ENCODE measurements at regions of chr2 and their contacts with region 1.

Region 1: DNA sequence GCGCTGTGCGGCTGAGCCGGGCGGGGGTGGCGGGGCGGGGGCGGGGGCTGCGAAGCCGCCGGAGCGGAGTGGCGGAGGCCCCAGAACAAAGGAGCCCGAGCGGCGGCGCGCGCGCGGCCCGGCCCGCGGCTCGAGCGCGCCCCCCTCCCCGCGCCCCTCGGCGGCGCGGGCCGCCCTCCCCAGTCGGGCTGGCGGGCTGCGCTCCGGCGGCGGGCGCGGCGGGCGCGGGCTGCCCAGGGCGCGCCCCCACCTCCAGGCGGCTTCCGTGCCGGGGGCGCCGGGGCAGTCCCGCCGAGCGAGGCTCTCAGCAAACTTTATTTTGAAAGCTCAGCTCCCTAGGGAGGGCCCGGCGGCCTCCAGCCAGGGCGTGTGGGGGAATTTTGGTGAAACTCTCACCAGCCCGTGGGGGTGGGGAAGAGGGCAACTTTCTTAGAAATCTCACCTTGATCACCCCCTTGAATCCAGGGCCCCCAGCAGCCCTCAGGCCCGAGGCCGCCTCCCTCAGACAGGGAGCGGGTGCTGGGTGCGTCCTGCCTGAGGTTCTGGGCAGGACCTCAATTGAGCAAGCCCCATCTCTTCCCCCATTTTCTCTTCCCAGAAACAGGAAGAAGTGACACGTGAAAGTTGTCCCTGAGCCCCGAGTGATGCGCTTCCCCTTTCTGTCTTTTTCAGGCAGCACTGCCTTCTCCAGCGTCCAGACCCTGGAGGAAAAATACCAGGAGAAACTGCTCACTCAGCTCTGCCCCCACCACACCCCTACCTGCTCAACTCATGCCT is 786 bp downstream of the TET3 start:
- DNase-seq: peak; percentile 55 to 89 (median 81)
- ATAC-seq: no peak
- H3K4me3 ChIP-seq: peak overlapping the region; percentile 51
- H3K27ac ChIP-seq: peak overlapping the region; percentile 83
- H3K4me1 ChIP-seq: peaks cover 63% of the 10 kb centered on the region in 2 experiments
- H3K27me3 ChIP-seq: no peaks in the 10 kb centered on the region
- CTCF ChIP-seq: no peak
- EP300 ChIP-seq: 0 out of 2 replicates have a peak, but pooled peaks have one; percentile 3
- POLR2A ChIP-seq: no peak
- RAD21 ChIP-seq: no peak

Region 2: DNA sequence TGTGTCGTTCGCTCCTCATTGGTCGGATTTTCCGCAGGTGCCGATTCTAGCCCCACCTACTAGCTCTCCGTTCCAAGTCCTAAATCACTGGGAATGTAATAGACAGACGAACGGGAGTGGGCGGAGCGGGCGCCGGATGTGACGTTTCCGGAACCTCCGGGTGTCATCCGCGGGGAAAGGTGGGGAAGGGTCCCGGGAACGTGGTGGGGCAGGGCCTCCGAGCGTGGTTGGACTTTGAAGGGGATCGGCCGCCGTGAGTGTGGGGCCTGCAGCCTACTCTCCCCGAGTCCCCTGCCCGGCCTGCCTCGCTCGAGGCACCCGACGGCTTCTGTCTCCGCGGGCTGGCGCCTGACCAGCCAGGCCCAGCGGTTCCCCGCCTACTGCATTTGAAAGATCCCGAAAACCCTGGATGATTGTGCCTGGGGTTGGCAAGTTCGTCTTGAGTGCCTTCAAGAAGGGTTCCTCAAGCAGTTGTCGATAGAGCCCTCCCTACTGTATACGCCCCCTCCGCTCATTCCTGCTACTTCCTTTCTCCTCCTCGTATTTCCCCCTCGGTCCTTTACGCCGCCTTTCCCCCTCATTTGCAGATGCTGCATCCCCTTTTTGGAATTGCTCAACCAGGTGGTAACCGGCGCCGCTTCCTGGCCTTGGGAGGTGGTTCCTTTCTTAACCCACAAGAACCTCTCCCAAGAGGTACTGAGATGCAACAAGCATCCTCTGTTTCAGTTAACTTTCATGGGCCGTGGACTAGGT is 156.5 kb before region 1 on chr2 and contains the start of gene STAMBP:
- CTCF ChIA-PET with region 1: interaction called, 4 read pairs
- POLR2A ChIA-PET with region 1: no interaction called
- in situ Hi-C with region 1: no loop called
- intact Hi-C with region 1: loop called (anchors 10 kb)
- DNase-seq: peak; percentile 95 to 98 (median 96)
- ATAC-seq: peak; percentile 95
- H3K4me3 ChIP-seq: peak within 1 kb of the TSS; percentile 62
- H3K27ac ChIP-seq: peak within 1 kb of the TSS; percentile 89
- H3K4me1 ChIP-seq: peaks cover 7 to 13% of the 10 kb centered on the region in 2 experiments; a peak in 4 of 5 replicates
- H3K27me3 ChIP-seq: no peaks in the 10 kb centered on the region
- CTCF ChIP-seq: no peak
- EP300 ChIP-seq: no peak
- POLR2A ChIP-seq: peak; percentile 89
- RAD21 ChIP-seq: no peak
- polyA plus RNA-seq, gene STAMBP: 50.1 to 75.2 TPM

Region 3: DNA sequence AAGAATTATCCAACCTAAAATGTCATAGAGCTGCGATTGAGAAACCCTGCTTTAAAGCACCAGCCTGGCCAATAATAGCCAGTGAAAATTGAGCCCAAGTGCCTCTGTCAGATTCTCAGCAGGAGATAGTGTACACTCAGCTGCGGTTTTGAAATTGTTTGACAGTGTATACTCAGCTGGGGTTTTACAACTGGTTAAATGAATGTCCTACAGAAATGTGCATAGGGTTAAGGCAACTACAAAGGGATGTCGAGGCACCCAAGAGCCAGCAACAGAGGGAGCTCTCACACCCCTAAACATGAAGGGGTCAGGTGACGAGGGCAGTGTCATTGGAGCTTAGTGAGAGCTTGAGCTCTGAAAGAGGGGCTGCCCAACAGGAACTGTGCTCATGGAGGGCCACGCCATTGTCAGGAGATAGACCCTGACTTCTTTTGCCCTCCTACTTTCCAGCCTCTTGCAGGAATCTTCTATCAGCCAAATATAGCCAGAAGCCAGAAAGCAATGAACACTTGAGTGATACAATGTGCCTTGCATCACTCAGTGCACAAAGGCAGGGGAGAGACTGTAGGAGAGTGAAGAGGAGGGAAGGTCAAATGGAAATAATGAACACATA is 77.5 kb before region 1 on chr2:
- CTCF ChIA-PET with region 1: interaction called, 4 read pairs
- POLR2A ChIA-PET with region 1: no interaction called
- in situ Hi-C with region 1: no loop called
- intact Hi-C with region 1: loop called (anchors 1 kb)
- DNase-seq: peak in 3 of 4 experiments; percentile 27 to 73 (median 63)
- ATAC-seq: peak; percentile 97
- H3K4me3 ChIP-seq: no peak overlapping the region
- H3K27ac ChIP-seq: no peak overlapping the region
- H3K4me1 ChIP-seq: no peaks in the 10 kb centered on the region; a peak in 1 of 5 replicates
- H3K27me3 ChIP-seq: no peaks in the 10 kb centered on the region
- CTCF ChIP-seq: peak; percentile 69 to 78 (median 73)
- EP300 ChIP-seq: no peak
- POLR2A ChIP-seq: no peak
- RAD21 ChIP-seq: peak; percentile 68 to 87

Region 4: GRCh38 chr2:73920577-73921545 is 64.6 kb before region 1 on chr2:
- CTCF ChIA-PET with region 1: no interaction called
- POLR2A ChIA-PET with region 1: interaction called, 3 read pairs
- in situ Hi-C with region 1: no loop called
- intact Hi-C with region 1: loop called (anchors 1 kb)
- DNase-seq: peak; percentile 87 to 89 (median 88)
- ATAC-seq: peak; percentile 95
- H3K4me3 ChIP-seq: no peak overlapping the region
- H3K27ac ChIP-seq: no peak overlapping the region
- H3K4me1 ChIP-seq: peaks cover 11 to 18% of the 10 kb centered on the region in 2 experiments
- H3K27me3 ChIP-seq: no peaks in the 10 kb centered on the region
- CTCF ChIP-seq: peak; percentile 71 to 76 (median 74)
- EP300 ChIP-seq: no peak
- POLR2A ChIP-seq: no peak
- RAD21 ChIP-seq: peak; percentile 41 to 61

Region 5: GRCh38 chr2:73956231-73956865 is 29.1 kb before region 1 on chr2:
- CTCF ChIA-PET with region 1: no interaction called
- POLR2A ChIA-PET with region 1: interaction called, 4 read pairs
- in situ Hi-C with region 1: no loop called
- intact Hi-C with region 1: loop called (anchors 2 kb)
- DNase-seq: no peak
- ATAC-seq: no peak
- H3K4me3 ChIP-seq: no peak overlapping the region
- H3K27ac ChIP-seq: no peak overlapping the region
- H3K4me1 ChIP-seq: no peaks in the 10 kb centered on the region; a peak in 1 of 5 replicates
- H3K27me3 ChIP-seq: no peaks in the 10 kb centered on the region
- CTCF ChIP-seq: no peak
- EP300 ChIP-seq: no peak
- POLR2A ChIP-seq: no peak
- RAD21 ChIP-seq: 0 out of 4 replicates have a peak, but pooled peaks of 1 of the 2 experiments have one; percentile 14

Region 6: DNA sequence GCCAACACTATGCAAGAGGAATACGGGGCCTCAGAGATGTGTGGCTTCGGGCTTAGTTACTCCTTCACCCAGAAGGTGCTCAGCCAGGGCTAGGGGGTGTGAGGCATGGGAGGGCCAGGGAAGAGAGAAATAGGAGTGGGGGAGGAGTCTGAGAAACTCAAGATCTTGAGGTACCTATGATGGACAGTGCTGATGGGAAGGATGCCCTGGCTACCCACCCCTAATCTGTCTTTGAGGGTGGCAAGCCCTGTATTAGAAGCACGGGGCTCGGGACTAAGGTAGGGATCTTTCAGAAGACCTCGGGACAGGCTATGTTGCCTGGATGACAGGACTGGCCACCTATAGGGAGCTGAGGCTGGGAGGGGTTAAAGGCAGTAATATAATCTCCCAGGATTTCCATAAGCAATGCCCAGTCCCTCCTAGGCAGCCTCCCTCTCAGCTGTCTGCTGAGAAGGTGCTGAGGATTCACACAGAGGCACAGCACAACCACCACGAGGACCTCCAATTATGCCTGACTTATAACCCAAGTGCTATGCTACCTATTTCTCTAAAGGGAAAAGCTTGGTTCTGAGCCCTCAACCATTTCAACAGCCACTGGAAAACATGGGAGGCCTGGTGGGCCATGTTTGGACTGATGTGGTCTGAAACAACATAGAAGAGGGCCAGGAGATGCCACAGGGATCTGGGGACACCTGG is 236.3 kb after region 1 on chr2:
- CTCF ChIA-PET with region 1: no interaction called
- POLR2A ChIA-PET with region 1: no interaction called
- in situ Hi-C with region 1: no loop called
- intact Hi-C with region 1: no loop called
- DNase-seq: no peak
- ATAC-seq: peak; percentile 49
- H3K4me3 ChIP-seq: no peak overlapping the region
- H3K27ac ChIP-seq: no peak overlapping the region
- H3K4me1 ChIP-seq: peaks cover 3 to 13% of the 10 kb centered on the region in 2 experiments
- H3K27me3 ChIP-seq: no peaks in the 10 kb centered on the region
- CTCF ChIP-seq: no peak
- EP300 ChIP-seq: no peak
- POLR2A ChIP-seq: no peak; the same call in 1 of the 2 replicates
- RAD21 ChIP-seq: no peak

Region 7: GRCh38 chr2:75292826-75293225 is 1307.3 kb after region 1 on chr2:
- CTCF ChIA-PET with region 1: no interaction called
- POLR2A ChIA-PET with region 1: no interaction called
- in situ Hi-C with region 1: no loop called
- intact Hi-C with region 1: no loop called
- DNase-seq: no peak
- ATAC-seq: no peak
- H3K4me3 ChIP-seq: no peak overlapping the region
- H3K27ac ChIP-seq: no peak overlapping the region
- H3K4me1 ChIP-seq: no peaks in the 10 kb centered on the region
- H3K27me3 ChIP-seq: no peaks in the 10 kb centered on the region
- CTCF ChIP-seq: no peak
- EP300 ChIP-seq: no peak
- POLR2A ChIP-seq: no peak
- RAD21 ChIP-seq: no peak

Measured in K562 (cell line).